ENCODE measurements at regions of chr17 and their contacts with region 1.

Region 1: GRCh38 chr17:35088881-35089585 is 25.5 kb upstream of the RFFL start:
- DNase-seq: peak; percentile 92
- H3K4me3 ChIP-seq: peak overlapping the region; percentile 61 to 98 (median 94)
- H3K27ac ChIP-seq: peak overlapping the region; percentile 84 to 97 (median 96)
- H3K4me1 ChIP-seq: peaks cover 0 to 31% (median 7%) of the 10 kb centered on the region in 4 donors
- H3K27me3 ChIP-seq: no peaks in the 10 kb centered on the region
- CTCF ChIP-seq: peak in 3 of 4 experiments; percentile 56 to 81 (median 60)
- EP300 ChIP-seq: no peak
- POLR2A ChIP-seq: no peak

Region 2: DNA sequence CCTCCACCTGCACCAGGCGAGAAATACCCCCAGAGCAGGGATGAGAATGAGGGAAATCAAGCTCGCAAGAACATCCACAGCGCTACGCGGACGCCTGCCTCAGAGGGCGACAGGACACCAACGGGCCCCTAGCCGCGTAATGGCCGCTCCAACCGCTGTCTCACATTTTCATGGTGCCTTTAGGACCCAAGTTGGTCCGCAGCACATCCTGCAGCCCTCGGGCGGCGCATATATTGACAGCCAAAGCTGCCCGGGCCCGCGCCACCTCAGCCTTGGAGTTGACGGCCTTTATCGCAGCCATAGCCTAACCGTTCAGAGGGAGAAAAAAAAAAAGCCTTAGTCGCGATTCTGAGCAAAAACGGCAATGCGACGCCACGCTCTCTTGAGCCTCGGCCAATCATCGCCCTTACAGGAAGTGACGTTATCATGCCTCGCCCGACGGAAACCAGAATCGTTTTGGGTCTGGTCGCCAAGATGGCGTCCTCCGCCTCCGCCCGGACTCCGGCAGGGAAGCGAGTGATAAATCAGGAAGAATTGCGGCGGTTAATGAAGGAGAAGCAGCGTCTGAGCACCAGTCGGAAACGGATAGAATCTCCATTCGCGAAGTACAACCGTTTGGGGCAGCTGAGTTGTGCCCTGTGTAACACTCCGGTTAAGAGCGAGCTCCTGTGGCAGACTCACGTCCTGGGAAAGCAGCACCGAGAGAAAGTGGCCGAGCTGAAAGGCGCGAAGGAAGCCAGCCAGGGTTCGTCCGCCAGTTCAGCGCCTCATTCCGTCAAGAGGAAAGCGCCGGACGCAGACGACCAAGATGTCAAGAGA is 127.7 kb before region 1 on chr17 and contains the starts of genes CCT6B and ZNF830:
- intact Hi-C with region 1: loop called (anchors 1 kb)
- DNase-seq: peak; percentile 97
- H3K4me3 ChIP-seq: peak within 1 kb of the TSS; percentile 87 to 91 (median 88)
- H3K27ac ChIP-seq: peak within 1 kb of the TSS; percentile 93 to 96 (median 94)
- H3K4me1 ChIP-seq: peaks cover 0 to 27% (median 20%) of the 10 kb centered on the region in 4 donors
- H3K27me3 ChIP-seq: no peaks in the 10 kb centered on the region
- CTCF ChIP-seq: no peak
- EP300 ChIP-seq: no peak
- POLR2A ChIP-seq: peak; percentile 53 to 62
- total RNA-seq, gene CCT6B: 3.3 to 4.3 (median 3.5) TPM
- total RNA-seq, gene ZNF830: 8.6 to 14.3 (median 12.8) TPM

Region 3: DNA sequence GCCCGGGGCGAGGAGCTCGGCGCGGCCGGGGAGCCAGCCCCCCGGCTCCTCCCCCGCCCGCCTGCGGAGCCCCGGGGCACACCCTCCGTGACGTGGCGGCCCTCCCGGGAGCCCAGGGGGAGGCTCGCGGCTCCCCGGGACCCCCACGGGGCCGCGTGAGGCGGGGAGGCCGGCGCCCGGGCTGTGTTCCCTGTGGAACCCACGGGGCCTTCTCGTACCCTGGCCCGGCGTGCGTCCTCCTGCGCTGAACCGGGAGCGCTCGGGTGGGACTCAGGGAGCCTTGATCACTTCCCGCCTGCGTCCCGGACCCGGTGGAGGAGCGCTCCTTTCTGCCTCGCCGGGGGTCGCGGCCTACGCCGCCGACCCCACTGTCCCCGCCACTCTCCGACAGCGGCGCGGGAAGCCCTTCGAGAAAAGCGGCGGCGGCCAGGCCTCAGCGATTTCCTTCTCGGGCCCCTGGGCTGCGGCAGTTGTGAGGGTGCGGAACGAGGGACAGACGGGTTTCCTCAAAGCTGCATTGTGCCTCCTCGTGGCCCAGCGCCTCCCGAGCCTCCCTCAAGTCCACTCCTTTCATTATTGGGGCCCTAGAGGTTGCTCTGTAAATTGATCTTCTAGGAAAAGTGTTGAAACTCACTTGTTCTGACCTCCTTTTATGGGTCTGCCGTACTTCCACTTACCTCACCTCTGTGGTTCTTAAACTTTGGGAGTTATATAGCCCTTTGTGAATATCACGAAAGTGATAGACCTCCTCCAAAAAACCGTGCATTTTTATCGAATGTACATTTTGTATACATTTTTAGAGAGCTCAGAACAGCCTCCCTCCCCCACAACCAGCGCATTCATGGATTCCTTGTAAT is 108.1 kb before region 1 on chr17:
- intact Hi-C with region 1: loop called (anchors 1 kb)
- DNase-seq: peak; percentile 91
- H3K4me3 ChIP-seq: peak overlapping the region; percentile 74 to 80 (median 77)
- H3K27ac ChIP-seq: peak overlapping the region; percentile 94 to 98 (median 96)
- H3K4me1 ChIP-seq: peaks cover 0 to 36% (median 28%) of the 10 kb centered on the region in 4 donors
- H3K27me3 ChIP-seq: no peaks in the 10 kb centered on the region
- CTCF ChIP-seq: peak in 3 of 4 experiments; percentile 5 to 25 (median 23)
- EP300 ChIP-seq: no peak
- POLR2A ChIP-seq: peak in 1 of 2 donors; percentile 48

Region 4: GRCh38 chr17:34998205-34998604 is 90.8 kb before region 1 on chr17:
- intact Hi-C with region 1: loop called (anchors 2 kb)
- DNase-seq: peak; percentile 89
- H3K4me3 ChIP-seq: peak overlapping the region in 2 of 4 donors; percentile 4 to 13
- H3K27ac ChIP-seq: peak overlapping the region; percentile 86 to 92 (median 89)
- H3K4me1 ChIP-seq: peaks cover 0 to 69% (median 57%) of the 10 kb centered on the region in 4 donors
- H3K27me3 ChIP-seq: no peaks in the 10 kb centered on the region
- CTCF ChIP-seq: peak; percentile 74 to 87 (median 79)
- EP300 ChIP-seq: no peak
- POLR2A ChIP-seq: no peak

Region 5: DNA sequence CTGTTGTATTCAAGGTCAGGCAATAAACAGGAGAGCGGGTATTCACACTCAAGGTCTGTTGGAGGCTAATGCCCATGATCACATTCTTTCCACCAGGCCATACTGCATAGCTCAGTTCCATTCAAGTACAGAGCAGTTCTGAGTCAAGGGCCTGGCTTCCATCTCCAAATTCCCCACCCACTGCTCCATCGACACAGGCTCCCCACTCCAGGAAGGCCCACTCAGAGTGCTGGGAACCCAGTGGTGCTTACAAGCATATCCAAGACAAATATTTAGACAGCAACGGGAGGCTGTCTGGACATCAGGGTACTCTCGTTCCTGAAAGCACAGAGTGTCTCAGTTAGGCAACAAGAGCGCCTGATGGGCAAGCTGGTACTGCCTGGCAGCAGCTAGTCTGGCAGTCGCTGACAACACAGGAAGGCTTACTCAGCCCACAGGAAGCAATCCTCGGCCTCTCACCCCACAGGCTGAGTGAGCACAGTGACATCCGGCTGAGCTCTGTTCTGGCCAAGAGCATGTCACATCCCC is 66.4 kb before region 1 on chr17:
- intact Hi-C with region 1: loop called (anchors 2 kb)
- DNase-seq: peak; percentile 93
- H3K4me3 ChIP-seq: no peak overlapping the region
- H3K27ac ChIP-seq: peak overlapping the region; percentile 65 to 79 (median 74)
- H3K4me1 ChIP-seq: peaks cover 0 to 48% (median 42%) of the 10 kb centered on the region in 4 donors
- H3K27me3 ChIP-seq: no peaks in the 10 kb centered on the region
- CTCF ChIP-seq: peak; percentile 30 to 59 (median 42)
- EP300 ChIP-seq: peak; percentile 3 to 93 (median 56)
- POLR2A ChIP-seq: no peak

Region 6: GRCh38 chr17:35041390-35041789 is 47.6 kb before region 1 on chr17:
- intact Hi-C with region 1: no loop called
- DNase-seq: no peak
- H3K4me3 ChIP-seq: no peak overlapping the region
- H3K27ac ChIP-seq: no peak overlapping the region
- H3K4me1 ChIP-seq: no peaks in the 10 kb centered on the region
- H3K27me3 ChIP-seq: no peaks in the 10 kb centered on the region
- CTCF ChIP-seq: no peak
- EP300 ChIP-seq: no peak
- POLR2A ChIP-seq: no peak

Region 7: GRCh38 chr17:35063514-35064223 is 25.4 kb before region 1 on chr17 and contains the start of gene RFFL:
- intact Hi-C with region 1: loop called (anchors 1 kb)
- DNase-seq: peak; percentile 95
- H3K4me3 ChIP-seq: peak within 1 kb of the TSS in 3 of 4 donors; percentile 16 to 29 (median 26)
- H3K27ac ChIP-seq: peak within 1 kb of the TSS; percentile 79 to 88 (median 84)
- H3K4me1 ChIP-seq: peaks cover 0 to 20% (median 17%) of the 10 kb centered on the region in 4 donors
- H3K27me3 ChIP-seq: no peaks in the 10 kb centered on the region
- CTCF ChIP-seq: peak in 2 of 4 experiments; percentile 11 to 19
- EP300 ChIP-seq: no peak
- POLR2A ChIP-seq: peak in 1 of 2 donors; percentile 22
- total RNA-seq, gene RFFL: 16.5 to 25.2 (median 21.8) TPM

Region 8: DNA sequence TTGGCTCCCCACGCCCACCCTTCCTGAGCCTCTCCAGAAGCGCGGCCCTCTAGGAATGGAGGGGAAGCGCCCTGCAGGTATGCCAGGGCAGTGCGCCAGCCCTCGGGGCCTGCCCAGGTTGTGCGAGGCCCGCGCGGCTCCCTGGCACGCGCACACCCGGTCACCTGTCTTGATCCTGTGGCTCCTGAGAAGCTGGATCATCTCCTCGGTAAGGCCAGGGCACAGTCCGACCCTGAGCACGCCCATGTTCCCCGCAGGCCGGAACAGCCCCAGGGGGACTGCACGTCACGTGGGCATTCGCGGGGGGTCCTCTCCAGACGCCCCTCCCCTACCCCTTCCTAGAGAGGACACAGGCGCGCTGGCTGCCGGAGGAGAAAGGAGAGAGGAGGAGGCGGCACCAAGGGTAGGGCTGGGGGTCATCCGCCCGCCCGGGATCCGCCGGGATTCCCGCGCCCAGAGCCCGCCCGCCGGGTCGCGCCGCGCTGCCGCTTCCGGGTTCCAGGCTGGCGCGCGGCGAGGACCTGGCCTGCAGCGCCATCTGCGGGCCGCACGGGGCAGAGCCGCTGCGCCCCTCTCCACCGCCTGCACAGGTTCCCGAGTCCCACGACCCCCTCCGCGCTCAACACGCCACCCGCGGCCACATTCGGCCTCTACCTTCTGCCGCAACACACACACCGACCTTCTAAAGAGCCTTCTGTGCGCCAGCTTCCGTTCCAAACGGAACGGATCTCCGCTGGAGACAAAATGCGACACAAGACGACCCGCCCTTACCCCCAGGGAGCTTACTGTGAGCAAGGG is 30.5 kb after region 1 on chr17 and contains the start of gene RAD51D:
- intact Hi-C with region 1: loop called (anchors 5 kb)
- DNase-seq: peak; percentile 83
- H3K4me3 ChIP-seq: peak within 1 kb of the TSS; percentile 68 to 88 (median 79)
- H3K27ac ChIP-seq: peak within 1 kb of the TSS; percentile 75 to 80 (median 80)
- H3K4me1 ChIP-seq: peaks cover 0 to 28% (median 23%) of the 10 kb centered on the region in 4 donors
- H3K27me3 ChIP-seq: no peaks in the 10 kb centered on the region
- CTCF ChIP-seq: peak; percentile 69 to 97 (median 79)
- EP300 ChIP-seq: no peak
- POLR2A ChIP-seq: no peak
- total RNA-seq, gene RAD51D: 4.3 to 12.6 (median 7.9) TPM

Measured in sigmoid colon (tissue), 7 donors.